Right cardiac atrium (tissue), 5 donors: ENCODE measurements at regions of chr6 and their contacts with region 1.

Region 1: DNA sequence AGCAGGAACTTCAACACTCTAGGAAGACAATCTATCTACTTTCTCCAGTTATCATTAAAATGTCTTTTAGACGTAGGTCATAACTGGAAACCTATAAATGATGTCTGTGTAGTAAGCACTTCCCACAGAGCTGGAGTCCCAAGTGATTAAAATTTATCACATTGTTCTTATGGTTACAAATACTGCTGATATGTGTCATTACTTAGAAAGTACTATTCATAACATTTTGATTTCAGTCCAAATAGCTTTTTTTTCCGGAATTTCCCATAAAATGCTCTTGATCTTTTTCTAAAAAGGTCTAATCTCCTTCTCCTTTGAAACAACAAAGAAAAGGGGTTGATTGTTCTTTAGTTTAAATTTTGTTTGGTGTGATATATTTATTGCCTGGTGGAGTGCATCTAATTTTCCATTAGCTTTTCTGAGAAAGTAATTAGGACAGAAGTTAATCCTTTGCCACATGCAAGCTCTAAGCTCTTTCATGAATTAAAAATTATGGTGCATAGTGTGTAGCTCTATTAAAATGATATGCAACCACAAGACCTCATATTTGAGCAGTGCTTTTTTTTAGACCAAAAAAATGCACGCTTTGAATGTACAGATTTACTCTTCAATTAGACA is 132.7 kb upstream of the TCF21 start:
- DNase-seq: no peak
- ATAC-seq: peak; percentile 78 to 93
- H3K4me3 ChIP-seq: no peak overlapping the region
- H3K27ac ChIP-seq: peak overlapping the region; percentile 71
- H3K4me1 ChIP-seq: peaks cover 2% of the 10 kb centered on the region
- H3K27me3 ChIP-seq: no peaks in the 10 kb centered on the region

Region 2: GRCh38 chr6:133701633-133702331 is 54.4 kb before region 1 on chr6:
- intact Hi-C with region 1: no loop called
- DNase-seq: peak; percentile 57 to 82 (median 74)
- ATAC-seq: peak; percentile 88 to 90
- H3K4me3 ChIP-seq: no peak overlapping the region
- H3K27ac ChIP-seq: no peak overlapping the region
- H3K4me1 ChIP-seq: no peaks in the 10 kb centered on the region
- H3K27me3 ChIP-seq: no peaks in the 10 kb centered on the region

Region 3: GRCh38 chr6:133889557-133890403 is 133.6 kb after region 1 on chr6:
- intact Hi-C with region 1: loop called in 1 of 4 experiments (anchors 10 kb)
- DNase-seq: peak; percentile 50 to 80 (median 79)
- ATAC-seq: peak; percentile 45 to 47
- H3K4me3 ChIP-seq: peak overlapping the region; percentile 26
- H3K27ac ChIP-seq: peak overlapping the region; percentile 72
- H3K4me1 ChIP-seq: no peaks in the 10 kb centered on the region
- H3K27me3 ChIP-seq: no peaks in the 10 kb centered on the region